MCF 10A (cell line): ENCODE measurements at regions of chr11 and their contacts with region 1.

Region 1: GRCh38 chr11:61679893-61680621 is at the start of gene DAGLA:
- DNase-seq: peak; percentile 51
- H3K4me3 Mint-ChIP-seq: peak within 1 kb of the TSS; percentile 68
- H3K27ac Mint-ChIP-seq: no peak within 1 kb of the TSS
- H3K4me1 Mint-ChIP-seq: no peaks in the 10 kb centered on the region
- H3K27me3 Mint-ChIP-seq: peaks cover 47% of the 10 kb centered on the region
- CTCF ChIP-seq: peak; percentile 95
- total RNA-seq, gene DAGLA: 1.0 and 1.5 TPM in 2 replicates

Region 2: DNA sequence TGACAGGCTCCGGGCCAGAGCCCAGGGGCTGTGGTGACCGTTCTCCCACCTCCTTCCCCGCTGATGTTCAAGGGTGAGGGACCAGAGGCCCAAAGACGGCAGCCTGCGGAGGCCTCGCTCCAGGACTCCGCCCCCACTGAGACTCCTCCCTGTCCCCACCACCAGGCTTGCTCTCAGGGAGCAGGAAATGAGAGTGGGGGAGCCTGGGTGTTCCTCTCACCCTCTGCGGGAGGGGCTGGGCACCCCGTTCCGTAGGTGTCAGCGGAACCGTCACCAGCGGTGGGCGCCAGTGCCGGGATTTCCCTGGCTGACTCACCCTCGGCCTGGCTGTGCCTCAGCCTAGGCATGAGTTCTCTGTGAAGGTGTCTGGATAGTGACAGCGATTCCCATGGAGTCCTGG is 15.9 kb after region 1 on chr11:
- CTCF ChIA-PET with region 1: interaction called, 16 read pairs
- POLR2A ChIA-PET with region 1: interaction called, 7 read pairs
- intact Hi-C with region 1: loop called (anchors 1 kb)
- DNase-seq: peak; percentile 90
- H3K4me3 Mint-ChIP-seq: peak overlapping the region; percentile 55
- H3K27ac Mint-ChIP-seq: peak overlapping the region; percentile 31
- H3K4me1 Mint-ChIP-seq: peaks cover 44% of the 10 kb centered on the region
- H3K27me3 Mint-ChIP-seq: no peaks in the 10 kb centered on the region
- CTCF ChIP-seq: no peak

Region 3: GRCh38 chr11:61803889-61804647 is 124.0 kb after region 1 on chr11:
- CTCF ChIA-PET with region 1: no interaction called
- POLR2A ChIA-PET with region 1: no interaction called
- intact Hi-C with region 1: no loop called
- DNase-seq: no peak
- H3K4me3 Mint-ChIP-seq: no peak overlapping the region
- H3K27ac Mint-ChIP-seq: no peak overlapping the region
- H3K4me1 Mint-ChIP-seq: no peaks in the 10 kb centered on the region
- H3K27me3 Mint-ChIP-seq: no peaks in the 10 kb centered on the region
- CTCF ChIP-seq: no peak